A673 (cell line): ENCODE measurements at regions of chr11 and their contacts with region 1.

Region 1: DNA sequence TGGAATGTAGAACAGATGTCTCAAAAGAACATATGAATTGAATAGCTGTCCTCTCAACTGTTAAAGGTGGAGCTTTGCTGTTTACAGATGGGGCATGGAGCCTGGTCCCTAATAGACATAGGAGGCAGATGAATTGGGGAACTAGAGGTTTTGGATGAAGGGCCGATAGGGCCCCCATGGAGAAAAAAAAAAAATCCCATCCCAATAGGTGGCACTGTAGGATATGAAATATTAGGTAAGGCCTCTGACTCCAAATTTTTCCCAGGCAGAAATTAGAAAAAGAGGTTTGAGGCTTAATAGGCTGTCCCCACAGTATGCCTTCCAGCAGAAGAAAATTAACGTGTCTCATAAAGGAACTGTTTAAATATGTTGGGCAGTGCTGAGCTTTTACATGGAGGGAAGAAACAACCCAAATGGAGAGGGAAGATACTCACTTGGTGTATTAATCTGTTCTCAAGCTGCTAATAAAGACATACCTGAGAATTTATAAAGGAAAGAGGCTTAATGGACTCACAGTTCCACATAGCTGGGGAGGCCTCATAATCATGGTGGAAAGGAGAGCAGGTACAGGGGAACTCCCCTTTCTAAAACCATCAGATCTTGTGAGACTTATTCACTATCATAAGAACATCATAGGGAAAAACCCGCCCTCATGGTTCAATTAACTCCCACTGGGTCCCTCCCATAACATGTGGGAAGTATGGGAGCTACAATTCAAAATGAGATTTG is 30.1 kb upstream of the TMEM45B start:
- DNase-seq: peak; percentile 45
- H3K4me3 ChIP-seq: no peak overlapping the region
- H3K27ac ChIP-seq: no peak overlapping the region
- H3K4me1 ChIP-seq: no peaks in the 10 kb centered on the region
- H3K27me3 ChIP-seq: peaks cover 7% of the 10 kb centered on the region
- CTCF ChIP-seq: peak; percentile 45

Region 2: GRCh38 chr11:130159657-130160497 is 374.3 kb after region 1 on chr11 and contains the start of gene ST14:
- CTCF ChIA-PET with region 1: no interaction called
- POLR2A ChIA-PET with region 1: no interaction called
- intact Hi-C with region 1: loop called (anchors 10 kb)
- DNase-seq: no peak
- H3K4me3 ChIP-seq: peak within 1 kb of the TSS; percentile 23
- H3K27ac ChIP-seq: no peak within 1 kb of the TSS
- H3K4me1 ChIP-seq: peaks cover 9% of the 10 kb centered on the region
- H3K27me3 ChIP-seq: peaks cover 55% of the 10 kb centered on the region
- CTCF ChIP-seq: no peak
- total RNA-seq, gene ST14: 0.17 and 0.30 TPM in 2 replicates

Region 3: DNA sequence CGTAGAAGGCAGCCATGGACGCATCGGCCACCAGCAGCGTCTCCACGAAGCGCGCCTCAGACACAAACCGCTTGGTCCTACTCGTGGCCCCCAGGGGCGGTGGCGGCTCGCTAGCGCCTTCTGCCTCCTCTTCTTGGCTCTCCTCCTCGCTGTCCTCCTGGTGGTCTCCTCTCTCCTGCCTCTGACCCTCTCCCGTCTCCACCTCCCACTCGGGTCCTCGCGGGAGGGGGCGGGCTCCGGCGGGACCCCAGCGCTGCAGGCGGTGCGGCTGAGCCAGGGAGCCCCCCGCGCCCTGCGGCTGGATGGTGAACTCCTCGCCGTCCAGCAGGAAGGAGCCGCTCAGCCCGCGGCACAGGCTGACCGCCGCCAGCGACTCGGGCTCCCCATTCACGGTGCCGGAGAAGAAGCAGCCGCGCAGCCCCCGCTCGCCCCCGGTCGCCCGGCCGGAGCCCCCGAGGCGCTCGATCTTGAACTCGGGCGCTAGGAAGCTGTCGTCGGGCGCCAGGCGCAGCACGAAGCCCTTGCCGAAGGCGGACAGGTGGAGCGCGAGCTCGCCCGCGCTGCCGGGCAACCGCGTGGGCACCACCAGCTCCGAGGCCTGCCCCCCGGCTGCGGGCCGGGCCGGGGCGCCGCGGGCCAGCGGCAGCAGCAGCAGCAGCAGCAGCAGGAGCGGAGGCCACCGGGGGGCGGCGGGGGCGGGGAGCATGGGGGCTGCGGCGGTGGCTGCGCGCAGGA is 642.2 kb after region 1 on chr11:
- CTCF ChIA-PET with region 1: no interaction called
- POLR2A ChIA-PET with region 1: no interaction called
- intact Hi-C with region 1: loop called (anchors 5 kb)
- DNase-seq: no peak
- H3K4me3 ChIP-seq: peak overlapping the region; percentile 35
- H3K27ac ChIP-seq: no peak overlapping the region
- H3K4me1 ChIP-seq: peaks cover 14% of the 10 kb centered on the region
- H3K27me3 ChIP-seq: peaks cover 86% of the 10 kb centered on the region
- CTCF ChIP-seq: 0 out of 2 replicates have a peak, but pooled peaks have one; percentile 11